Activated CD4-positive, alpha-beta T cell treated with anti-CD3 and anti-CD28 coated beads for 36 hours (primary cell): ENCODE measurements at regions of chr12 and their contacts with region 1.

Region 1: DNA sequence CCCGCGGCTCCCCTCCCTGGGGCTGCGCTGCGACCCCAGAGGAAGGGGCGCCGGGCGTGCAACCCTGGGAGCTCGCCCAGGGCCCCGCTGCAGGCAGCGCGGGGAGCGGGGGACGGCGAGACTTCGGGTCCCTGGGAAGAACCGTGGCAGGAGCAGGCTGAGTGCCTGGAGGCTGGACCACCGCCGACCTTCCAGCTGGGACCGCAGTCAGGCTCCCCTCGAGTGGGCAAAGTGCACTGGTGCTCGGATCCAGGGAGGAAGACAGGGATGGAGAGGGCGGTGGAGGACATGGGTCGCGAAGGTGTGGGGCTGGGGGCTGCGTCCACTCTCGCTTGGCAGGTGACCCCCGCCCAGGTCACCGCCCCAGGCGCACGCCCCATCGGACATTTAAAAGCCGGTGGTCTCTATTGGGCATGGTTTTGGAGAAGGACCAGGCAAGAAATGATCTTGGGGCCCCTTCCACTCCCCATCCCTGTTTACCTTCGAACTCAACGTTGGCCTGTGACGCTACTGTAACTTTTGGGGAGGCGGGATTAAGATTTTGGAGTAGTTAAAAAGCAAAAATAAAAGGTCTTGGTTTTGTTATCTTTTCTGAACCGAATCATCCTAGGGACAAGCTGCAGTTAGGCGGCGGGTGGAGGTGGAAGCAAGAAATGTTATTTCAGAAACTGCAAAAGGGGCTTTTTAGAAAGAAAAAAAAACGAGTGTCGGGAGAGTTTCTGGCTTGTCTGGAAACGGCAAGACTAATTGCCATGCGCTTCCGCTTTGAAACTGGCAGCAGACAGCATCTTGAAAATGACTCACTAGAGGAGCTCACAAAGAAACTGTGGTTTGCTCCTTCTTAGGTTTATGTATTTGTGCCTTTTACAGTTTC is 1.0 kb downstream of the ELK3 start:
- DNase-seq: peak; percentile 86
- ATAC-seq: peak; percentile 73
- H3K4me3 Mint-ChIP-seq: peak overlapping the region; percentile 97
- H3K27ac Mint-ChIP-seq: peak overlapping the region; percentile 100
- H3K4me1 Mint-ChIP-seq: peaks cover 61% of the 10 kb centered on the region
- H3K27me3 Mint-ChIP-seq: no peaks in the 10 kb centered on the region

Region 2: DNA sequence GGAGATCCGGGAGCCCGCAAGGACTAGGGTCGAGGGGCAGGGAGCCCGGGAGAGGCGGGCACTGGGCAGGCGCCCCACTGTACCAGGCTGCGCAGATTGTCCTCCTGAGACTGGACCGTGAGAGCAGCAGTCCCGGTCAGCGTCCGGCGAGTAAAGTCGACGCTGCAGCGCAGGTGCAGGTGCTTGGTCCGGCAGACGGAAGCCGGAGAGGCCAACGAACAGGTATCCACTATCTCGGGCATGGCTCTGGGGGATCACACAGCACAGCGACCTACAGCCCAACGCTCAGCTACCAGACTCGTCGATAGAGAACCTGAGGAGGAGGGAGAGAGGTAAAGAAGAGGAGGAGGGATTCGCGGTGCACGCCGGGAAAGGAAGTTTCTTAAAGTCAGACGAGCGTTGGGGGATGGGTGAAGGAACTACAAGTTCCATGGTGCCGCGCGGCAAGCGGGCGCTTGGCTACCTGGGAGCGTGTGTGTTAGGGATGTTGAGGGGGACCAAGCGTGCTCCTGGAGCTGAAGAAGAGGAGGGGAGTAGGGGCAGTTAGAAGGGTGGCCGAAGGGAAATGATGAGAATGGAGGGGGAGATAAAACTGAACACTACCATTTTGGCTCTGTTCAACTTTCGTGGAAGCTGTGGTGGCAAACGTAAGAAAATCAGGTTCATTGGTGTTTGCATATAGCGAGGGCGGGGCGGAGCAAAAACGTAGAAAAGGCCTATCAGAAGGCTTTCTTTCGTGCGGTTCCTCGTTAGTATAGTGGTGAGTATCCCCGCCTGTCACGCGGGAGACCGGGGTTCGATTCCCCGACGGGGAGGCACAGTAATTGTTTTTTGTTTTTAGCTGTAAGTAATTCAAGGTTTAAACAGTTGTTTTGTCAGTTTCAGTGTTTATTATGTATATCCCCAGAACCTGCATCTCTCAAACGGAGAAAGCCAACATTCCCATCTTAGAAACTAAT is 159.7 kb before region 1 on chr12 and contains the start of gene LTA4H:
- CTCF ChIA-PET with region 1: interaction called, 3 read pairs
- POLR2A ChIA-PET with region 1: no interaction called
- intact Hi-C with region 1: loop called in 1 of 2 experiments (anchors 1 kb)
- DNase-seq: peak; percentile 98
- ATAC-seq: peak; percentile 95
- H3K4me3 Mint-ChIP-seq: no peak within 1 kb of the TSS
- H3K27ac Mint-ChIP-seq: no peak within 1 kb of the TSS
- H3K4me1 Mint-ChIP-seq: peaks cover 13% of the 10 kb centered on the region
- H3K27me3 Mint-ChIP-seq: no peaks in the 10 kb centered on the region
- total RNA-seq, gene LTA4H: 138 to 147 TPM

Region 3: DNA sequence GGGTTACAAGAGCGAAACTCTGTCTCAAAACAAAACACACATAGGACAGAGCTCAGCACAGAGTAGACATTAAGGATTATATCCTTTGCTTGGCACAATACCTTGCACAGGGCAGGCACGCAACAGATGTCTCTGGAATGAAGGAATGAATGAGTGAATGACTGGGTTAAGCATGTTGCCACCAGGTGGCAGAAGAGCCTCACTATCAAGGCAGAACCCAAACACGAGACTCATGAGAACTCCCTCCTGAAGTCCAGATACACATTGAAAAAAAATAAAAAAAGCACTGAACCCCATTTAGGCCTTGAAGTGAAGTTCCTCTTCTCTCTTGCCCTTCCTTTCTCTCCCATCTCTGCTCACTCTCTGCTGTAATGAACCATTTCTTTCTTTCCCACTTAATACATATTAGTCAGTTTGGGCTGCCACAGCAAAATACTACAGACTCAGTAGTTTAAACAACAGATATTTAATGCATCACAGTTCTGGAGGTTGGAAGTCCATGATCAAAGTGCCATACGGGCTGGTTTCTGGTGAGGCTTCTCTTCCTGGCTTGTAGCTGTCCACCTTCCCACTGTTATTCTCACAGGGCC is 133.2 kb before region 1 on chr12:
- CTCF ChIA-PET with region 1: interaction called, 7 read pairs
- POLR2A ChIA-PET with region 1: no interaction called
- intact Hi-C with region 1: loop called (anchors 1 to 5 kb)
- DNase-seq: peak; percentile 87
- ATAC-seq: peak; percentile 91
- H3K4me3 Mint-ChIP-seq: no peak overlapping the region
- H3K27ac Mint-ChIP-seq: peak overlapping the region; percentile 47
- H3K4me1 Mint-ChIP-seq: peaks cover 23% of the 10 kb centered on the region
- H3K27me3 Mint-ChIP-seq: no peaks in the 10 kb centered on the region

Region 4: GRCh38 chr12:96177013-96177412 is 18.2 kb before region 1 on chr12:
- CTCF ChIA-PET with region 1: interaction called, 9 read pairs
- POLR2A ChIA-PET with region 1: interaction called, 20 read pairs
- intact Hi-C with region 1: loop called (anchors 1 kb)
- DNase-seq: peak; percentile 88
- ATAC-seq: peak; percentile 98
- H3K4me3 Mint-ChIP-seq: peak overlapping the region; percentile 18
- H3K27ac Mint-ChIP-seq: peak overlapping the region; percentile 83
- H3K4me1 Mint-ChIP-seq: peaks cover 25% of the 10 kb centered on the region
- H3K27me3 Mint-ChIP-seq: no peaks in the 10 kb centered on the region

Region 5: GRCh38 chr12:96375841-96376604 is 180.8 kb after region 1 on chr12:
- CTCF ChIA-PET with region 1: no interaction called
- POLR2A ChIA-PET with region 1: interaction called, 9 read pairs
- intact Hi-C with region 1: loop called in 1 of 2 experiments (anchors 5 kb)
- DNase-seq: no peak
- ATAC-seq: no peak
- H3K4me3 Mint-ChIP-seq: no peak overlapping the region
- H3K27ac Mint-ChIP-seq: peak overlapping the region; percentile 79
- H3K4me1 Mint-ChIP-seq: peaks cover 82% of the 10 kb centered on the region
- H3K27me3 Mint-ChIP-seq: no peaks in the 10 kb centered on the region

Region 6: GRCh38 chr12:96445691-96446583 is 250.7 kb after region 1 on chr12:
- CTCF ChIA-PET with region 1: interaction called, 3 read pairs
- POLR2A ChIA-PET with region 1: interaction called, 3 read pairs
- intact Hi-C with region 1: loop called in 1 of 2 experiments (anchors 5 kb)
- DNase-seq: peak; percentile 64
- ATAC-seq: peak; percentile 98
- H3K4me3 Mint-ChIP-seq: peak overlapping the region; percentile 56
- H3K27ac Mint-ChIP-seq: peak overlapping the region; percentile 96
- H3K4me1 Mint-ChIP-seq: peaks cover 45% of the 10 kb centered on the region
- H3K27me3 Mint-ChIP-seq: no peaks in the 10 kb centered on the region

Region 7: GRCh38 chr12:96906849-96907670 is 711.9 kb after region 1 on chr12 and contains the start of gene NEDD1:
- CTCF ChIA-PET with region 1: no interaction called
- POLR2A ChIA-PET with region 1: no interaction called
- intact Hi-C with region 1: loop called in 1 of 2 experiments (anchors 5 kb)
- DNase-seq: peak; percentile 89
- ATAC-seq: peak; percentile 84
- H3K4me3 Mint-ChIP-seq: peak within 1 kb of the TSS; percentile 84
- H3K27ac Mint-ChIP-seq: peak within 1 kb of the TSS; percentile 97
- H3K4me1 Mint-ChIP-seq: peaks cover 38% of the 10 kb centered on the region
- H3K27me3 Mint-ChIP-seq: no peaks in the 10 kb centered on the region
- total RNA-seq, gene NEDD1: 57.9 to 69.3 TPM